GM23248 (cell line): ENCODE measurements at regions of chr5 and their contacts with region 1.

Region 1: GRCh38 chr5:39570403-39571027 is 145.7 kb upstream of the DAB2 start:
- DNase-seq: peak; percentile 78
- H3K4me3 ChIP-seq: no peak overlapping the region
- H3K27ac ChIP-seq: no peak overlapping the region
- H3K4me1 ChIP-seq: no peaks in the 10 kb centered on the region
- H3K27me3 ChIP-seq: no peaks in the 10 kb centered on the region

Region 2: GRCh38 chr5:38467353-38468040 is 1103.0 kb before region 1 on chr5:
- in situ Hi-C with region 1: no loop called
- DNase-seq: peak; percentile 65
- H3K4me3 ChIP-seq: no peak overlapping the region
- H3K27ac ChIP-seq: peak overlapping the region; percentile 16; the same call in 1 of the 2 replicates
- H3K4me1 ChIP-seq: peaks cover 55% of the 10 kb centered on the region
- H3K27me3 ChIP-seq: no peaks in the 10 kb centered on the region

Region 3: DNA sequence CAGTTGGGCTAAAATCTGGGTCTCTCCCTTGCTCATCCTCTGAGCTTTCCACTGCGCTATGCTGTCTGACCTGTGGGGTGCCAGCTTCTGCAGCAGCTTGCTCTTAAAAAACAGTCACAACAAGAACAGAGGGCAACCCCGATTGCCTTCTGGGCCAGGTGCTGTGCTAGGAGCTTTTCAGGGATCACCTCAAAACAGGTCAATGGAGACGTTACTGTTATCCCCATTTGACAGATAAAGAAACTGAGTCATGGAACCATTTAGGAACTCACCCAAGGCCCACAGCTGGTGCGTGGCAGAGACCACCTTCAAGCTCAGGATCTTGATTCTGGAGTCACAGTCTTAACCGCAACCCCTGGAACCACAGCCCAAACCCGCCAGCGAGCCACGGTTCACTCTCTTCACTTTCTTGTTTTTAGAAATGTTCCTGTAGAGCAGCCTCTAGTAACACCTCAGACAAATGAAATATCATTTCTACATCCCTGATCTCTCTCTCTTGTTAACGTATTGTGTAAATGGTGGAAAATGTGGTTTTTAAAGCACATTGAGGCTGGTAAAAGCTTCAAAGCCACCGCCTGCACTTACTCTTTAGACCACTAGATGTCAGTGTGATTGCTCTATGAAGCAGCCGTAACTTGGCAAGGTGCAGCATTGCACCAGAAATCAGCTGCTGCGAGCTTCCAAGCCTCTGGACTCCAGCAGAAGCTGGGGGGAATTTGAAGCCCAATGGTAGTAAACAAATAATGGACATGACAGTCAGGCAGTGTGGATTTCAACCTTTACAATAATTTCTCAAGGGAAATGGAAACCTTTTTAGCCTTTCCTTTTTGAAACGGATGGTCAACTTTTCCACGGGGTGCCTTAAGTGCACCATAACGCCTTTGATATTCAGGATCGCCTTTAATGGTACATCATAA is 352.9 kb before region 1 on chr5:
- in situ Hi-C with region 1: loop called (anchors 25 kb)
- DNase-seq: peak; percentile 93
- H3K4me3 ChIP-seq: no peak overlapping the region
- H3K27ac ChIP-seq: no peak overlapping the region
- H3K4me1 ChIP-seq: peaks cover 13% of the 10 kb centered on the region
- H3K27me3 ChIP-seq: no peaks in the 10 kb centered on the region